ENCODE measurements at regions of chr16 and their contacts with region 1.

Region 1: GRCh38 chr16:21656795-21657768 is 4.7 kb upstream of the IGSF6 start:
- DNase-seq: peak; percentile 24 to 39
- H3K4me3 ChIP-seq: no peak overlapping the region
- H3K27ac ChIP-seq: no peak overlapping the region
- H3K4me1 ChIP-seq: no peaks in the 10 kb centered on the region
- H3K27me3 ChIP-seq: no peaks in the 10 kb centered on the region
- CTCF ChIP-seq: peak; percentile 89

Region 2: GRCh38 chr16:21646721-21647561 is 10.1 kb before region 1 on chr16:
- CTCF ChIA-PET with region 1: interaction called, 13 read pairs
- POLR2A ChIA-PET with region 1: interaction called, 6 read pairs
- intact Hi-C with region 1: no loop called
- DNase-seq: no peak
- H3K4me3 ChIP-seq: no peak overlapping the region
- H3K27ac ChIP-seq: no peak overlapping the region
- H3K4me1 ChIP-seq: no peaks in the 10 kb centered on the region
- H3K27me3 ChIP-seq: no peaks in the 10 kb centered on the region
- CTCF ChIP-seq: no peak

Region 3: DNA sequence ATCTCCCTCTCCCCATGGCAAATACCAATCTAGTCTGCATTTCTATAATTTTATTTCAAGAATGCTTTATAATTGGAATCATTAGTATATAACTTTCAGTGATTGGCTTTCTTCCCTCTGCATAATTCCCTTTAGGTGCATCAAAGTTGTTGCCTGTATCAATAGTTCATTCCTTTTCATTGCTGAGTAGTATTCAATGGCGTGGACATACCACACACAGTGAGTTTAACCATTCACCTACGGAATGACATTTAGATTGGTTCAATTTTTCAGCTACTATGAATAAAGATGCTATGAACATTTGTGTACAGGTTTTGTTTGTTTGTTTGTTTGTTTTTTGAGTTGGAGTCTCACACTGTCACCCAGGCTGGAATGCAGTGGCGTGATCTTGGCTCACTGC is 16.4 kb after region 1 on chr16:
- CTCF ChIA-PET with region 1: interaction called, 19 read pairs
- POLR2A ChIA-PET with region 1: interaction called, 3 read pairs
- intact Hi-C with region 1: no loop called
- DNase-seq: no peak
- H3K4me3 ChIP-seq: no peak overlapping the region
- H3K27ac ChIP-seq: no peak overlapping the region
- H3K4me1 ChIP-seq: no peaks in the 10 kb centered on the region
- H3K27me3 ChIP-seq: no peaks in the 10 kb centered on the region
- CTCF ChIP-seq: no peak

Region 4: GRCh38 chr16:21684199-21684598 is 27.1 kb after region 1 on chr16:
- CTCF ChIA-PET with region 1: no interaction called
- POLR2A ChIA-PET with region 1: no interaction called
- intact Hi-C with region 1: no loop called
- DNase-seq: no peak
- H3K4me3 ChIP-seq: no peak overlapping the region
- H3K27ac ChIP-seq: no peak overlapping the region
- H3K4me1 ChIP-seq: no peaks in the 10 kb centered on the region
- H3K27me3 ChIP-seq: peaks cover 14% of the 10 kb centered on the region
- CTCF ChIP-seq: peak; percentile 73

Region 5: GRCh38 chr16:21708533-21709115 is 51.5 kb after region 1 on chr16:
- CTCF ChIA-PET with region 1: interaction called, 4 read pairs
- POLR2A ChIA-PET with region 1: no interaction called
- intact Hi-C with region 1: loop called (anchors 1 kb)
- DNase-seq: peak; percentile 61 to 70
- H3K4me3 ChIP-seq: no peak overlapping the region
- H3K27ac ChIP-seq: no peak overlapping the region
- H3K4me1 ChIP-seq: no peaks in the 10 kb centered on the region
- H3K27me3 ChIP-seq: no peaks in the 10 kb centered on the region
- CTCF ChIP-seq: peak; percentile 87

Region 6: DNA sequence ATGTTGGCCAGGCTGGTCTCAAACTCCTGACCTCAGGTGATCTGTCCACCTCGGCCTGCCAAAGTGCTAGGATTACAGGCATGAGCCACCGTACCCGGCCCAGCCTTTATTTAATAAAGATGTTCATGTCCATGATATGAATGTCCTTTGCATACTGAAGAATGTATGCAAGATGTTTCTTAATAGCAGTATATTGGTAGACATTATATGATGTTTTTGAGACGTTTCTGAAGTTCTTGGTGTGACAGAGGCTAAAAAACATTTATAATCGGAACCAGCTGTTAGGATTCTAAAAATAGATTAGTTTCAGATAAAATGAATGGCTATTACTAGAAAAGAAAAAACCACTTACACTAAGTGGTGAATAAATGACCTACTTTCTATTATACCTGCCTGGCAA is 332.1 kb after region 1 on chr16:
- CTCF ChIA-PET with region 1: interaction called, 18 read pairs
- POLR2A ChIA-PET with region 1: no interaction called
- intact Hi-C with region 1: no loop called
- DNase-seq: no peak
- H3K4me3 ChIP-seq: no peak overlapping the region
- H3K27ac ChIP-seq: no peak overlapping the region
- H3K4me1 ChIP-seq: no peaks in the 10 kb centered on the region
- H3K27me3 ChIP-seq: no peaks in the 10 kb centered on the region
- CTCF ChIP-seq: no peak

Region 7: DNA sequence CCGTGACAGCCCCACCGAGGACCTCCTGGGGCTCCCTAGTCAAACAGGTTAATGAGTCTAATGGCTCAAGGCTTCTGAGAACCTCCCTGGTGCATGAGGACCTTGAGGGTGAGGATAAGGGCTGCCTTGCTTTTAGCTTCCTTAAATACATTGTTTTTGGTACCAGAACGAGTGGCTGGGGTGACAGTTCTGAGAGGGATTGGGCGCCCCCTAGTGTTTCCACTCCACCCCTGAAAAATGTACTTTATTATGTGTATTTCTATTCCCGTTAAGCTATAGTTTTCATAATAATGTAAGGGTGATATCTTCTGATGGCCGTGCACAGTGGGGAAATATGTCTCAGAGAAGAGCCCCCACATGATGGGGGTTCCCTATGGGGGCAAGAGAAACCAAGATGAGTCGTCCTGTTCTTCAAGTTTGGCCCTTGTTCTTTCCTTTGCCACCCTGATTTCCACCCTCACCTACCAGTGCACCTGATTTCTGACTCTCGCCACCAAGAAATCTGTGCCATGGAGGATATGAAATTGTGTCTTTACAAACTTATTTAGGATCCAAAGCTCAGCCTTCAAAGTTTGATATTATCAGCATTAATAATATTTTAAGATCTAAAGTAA is 420.7 kb after region 1 on chr16:
- CTCF ChIA-PET with region 1: interaction called, 10 read pairs
- POLR2A ChIA-PET with region 1: no interaction called
- intact Hi-C with region 1: no loop called
- DNase-seq: peak; percentile 36 to 67
- H3K4me3 ChIP-seq: no peak overlapping the region
- H3K27ac ChIP-seq: no peak overlapping the region
- H3K4me1 ChIP-seq: no peaks in the 10 kb centered on the region
- H3K27me3 ChIP-seq: no peaks in the 10 kb centered on the region
- CTCF ChIP-seq: peak; percentile 93

Region 8: GRCh38 chr16:22098405-22099255 is 441.5 kb after region 1 on chr16:
- CTCF ChIA-PET with region 1: no interaction called
- POLR2A ChIA-PET with region 1: no interaction called
- intact Hi-C with region 1: loop called (anchors 5 kb)
- DNase-seq: peak; percentile 27 to 55
- H3K4me3 ChIP-seq: peak overlapping the region; percentile 34; the same call in 1 of the 2 replicates
- H3K27ac ChIP-seq: no peak overlapping the region
- H3K4me1 ChIP-seq: no peaks in the 10 kb centered on the region
- H3K27me3 ChIP-seq: no peaks in the 10 kb centered on the region
- CTCF ChIP-seq: peak; percentile 66